PC-9 (cell line): ENCODE measurements at regions of chr3 and their contacts with region 1.

Region 1: DNA sequence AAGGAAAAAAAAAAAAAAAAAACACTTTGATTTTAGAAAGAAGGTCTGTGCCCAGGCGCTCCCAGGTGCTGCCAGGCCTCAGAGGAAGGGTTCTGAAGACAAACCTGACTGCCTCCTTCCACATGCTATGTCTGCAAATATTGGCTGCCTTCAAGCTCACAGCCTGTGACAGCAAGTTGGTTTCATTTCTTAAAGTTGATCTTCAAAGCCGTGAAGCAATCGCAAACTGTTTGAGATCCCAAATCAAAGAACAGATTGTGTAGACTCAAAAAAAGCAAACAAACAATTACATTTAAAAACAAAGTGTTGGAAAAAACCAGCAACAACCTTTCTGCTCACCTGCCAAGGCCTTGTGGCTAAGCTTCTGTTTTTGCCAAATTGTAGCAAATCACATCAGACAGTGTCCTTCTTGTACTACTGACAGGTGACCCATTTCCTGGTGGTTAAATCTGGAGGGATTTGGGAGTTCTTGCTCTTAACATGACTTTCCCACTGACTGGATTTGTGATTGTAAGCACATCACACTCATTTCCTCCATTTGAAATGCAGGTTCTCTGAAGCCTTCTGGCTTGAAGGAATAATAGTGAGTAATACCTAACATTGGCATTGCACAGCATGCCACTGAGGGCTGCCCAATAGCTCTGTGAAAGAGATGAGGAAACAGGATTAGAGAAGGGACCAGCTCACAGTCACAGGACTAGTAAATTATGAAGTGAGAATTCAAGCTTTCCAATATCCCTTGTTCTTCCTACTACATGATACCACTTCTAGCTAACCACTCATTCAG is 502.4 kb downstream of the LPP start:
- DNase-seq: no peak
- H3K4me3 ChIP-seq: no peak overlapping the region
- H3K27ac ChIP-seq: no peak overlapping the region
- H3K4me1 ChIP-seq: no peaks in the 10 kb centered on the region
- H3K27me3 ChIP-seq: no peaks in the 10 kb centered on the region
- CTCF ChIP-seq: no peak

Region 2: DNA sequence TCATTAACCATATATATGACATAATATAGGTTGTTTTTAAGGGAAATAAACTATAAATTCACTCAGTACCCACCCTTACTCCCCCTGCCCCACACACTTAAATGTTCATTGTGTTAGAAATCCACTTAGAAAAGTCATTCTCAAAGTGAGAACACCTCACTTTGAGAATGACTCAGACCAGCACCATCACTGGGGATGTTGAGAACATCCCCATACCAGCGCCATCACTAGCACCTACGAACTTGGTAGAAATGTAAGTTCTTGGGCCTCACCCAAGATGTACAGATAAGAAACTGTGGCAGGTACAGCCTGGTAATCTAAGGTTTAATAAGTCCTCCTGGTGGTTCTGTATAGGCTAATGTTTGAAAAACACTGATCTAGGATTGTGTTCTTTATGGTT is 139.9 kb before region 1 on chr3:
- CTCF ChIA-PET with region 1: no interaction called
- POLR2A ChIA-PET with region 1: interaction called, 11 read pairs
- intact Hi-C with region 1: no loop called
- DNase-seq: no peak
- H3K4me3 ChIP-seq: no peak overlapping the region
- H3K27ac ChIP-seq: no peak overlapping the region
- H3K4me1 ChIP-seq: peaks cover 15% of the 10 kb centered on the region
- H3K27me3 ChIP-seq: no peaks in the 10 kb centered on the region
- CTCF ChIP-seq: no peak